H1 (cell line): ENCODE measurements at regions of chrX and their contacts with region 1.

Region 1: GRCh38 chrX:24371391-24371972 is 11.0 kb downstream of the SUPT20HL1 start:
- DNase-seq: peak in 1 of 2 experiments; percentile 72
- H3K4me3 ChIP-seq: peak overlapping the region in 3 of 4 experiments; percentile 18 to 53 (median 23); a peak in 4 of 8 replicates
- H3K27ac ChIP-seq: no peak overlapping the region
- H3K4me1 ChIP-seq: peaks cover 7 to 22% (median 13%) of the 10 kb centered on the region in 4 experiments; a peak in 6 of 7 replicates
- H3K27me3 ChIP-seq: peaks cover 0 to 7% (median 4%) of the 10 kb centered on the region in 4 experiments; a peak in 3 of 7 replicates
- CTCF ChIP-seq: peak; percentile 48 to 81 (median 61)
- EP300 ChIP-seq: no peak
- POLR2A ChIP-seq: no peak
- RAD21 ChIP-seq: peak; percentile 74 to 80

Region 2: GRCh38 chrX:24259544-24260240 is 111.8 kb before region 1 on chrX:
- CTCF ChIA-PET with region 1: interaction called, 13 read pairs
- POLR2A ChIA-PET with region 1: no interaction called
- DNase-seq: no peak
- H3K4me3 ChIP-seq: no peak overlapping the region
- H3K27ac ChIP-seq: no peak overlapping the region
- H3K4me1 ChIP-seq: no peaks in the 10 kb centered on the region
- H3K27me3 ChIP-seq: no peaks in the 10 kb centered on the region
- CTCF ChIP-seq: peak in 2 of 3 experiments; percentile 55 to 58; a peak in 3 of 4 replicates
- EP300 ChIP-seq: no peak
- POLR2A ChIP-seq: no peak
- RAD21 ChIP-seq: peak; percentile 77 to 80

Region 3: DNA sequence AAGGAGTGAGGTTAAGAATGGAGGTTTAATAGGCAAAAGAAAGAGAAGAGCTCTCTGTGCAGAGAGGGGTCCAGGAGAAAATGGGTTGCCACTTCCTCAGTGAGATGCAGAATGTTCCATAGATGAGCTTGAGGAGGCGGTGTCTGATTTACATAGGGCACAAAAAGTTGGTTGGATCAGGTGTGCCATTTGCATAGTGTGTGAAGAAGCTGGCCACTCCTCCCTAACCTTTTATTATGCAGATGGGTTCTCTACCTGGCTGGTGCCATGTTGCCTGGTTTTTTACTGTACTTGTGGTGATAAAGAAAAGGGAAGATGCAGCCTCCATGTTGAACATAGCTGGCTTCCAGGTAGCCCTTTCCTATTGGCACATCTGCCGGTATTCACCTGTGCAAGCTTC is 16.2 kb after region 1 on chrX:
- CTCF ChIA-PET with region 1: interaction called, 15 read pairs
- POLR2A ChIA-PET with region 1: interaction called, 3 read pairs
- DNase-seq: no peak
- H3K4me3 ChIP-seq: no peak overlapping the region
- H3K27ac ChIP-seq: no peak overlapping the region
- H3K4me1 ChIP-seq: peaks cover 0 to 4% (median 1%) of the 10 kb centered on the region in 4 experiments; a peak in 2 of 7 replicates
- H3K27me3 ChIP-seq: no peaks in the 10 kb centered on the region
- CTCF ChIP-seq: no peak
- EP300 ChIP-seq: no peak
- POLR2A ChIP-seq: no peak
- RAD21 ChIP-seq: no peak

Region 4: DNA sequence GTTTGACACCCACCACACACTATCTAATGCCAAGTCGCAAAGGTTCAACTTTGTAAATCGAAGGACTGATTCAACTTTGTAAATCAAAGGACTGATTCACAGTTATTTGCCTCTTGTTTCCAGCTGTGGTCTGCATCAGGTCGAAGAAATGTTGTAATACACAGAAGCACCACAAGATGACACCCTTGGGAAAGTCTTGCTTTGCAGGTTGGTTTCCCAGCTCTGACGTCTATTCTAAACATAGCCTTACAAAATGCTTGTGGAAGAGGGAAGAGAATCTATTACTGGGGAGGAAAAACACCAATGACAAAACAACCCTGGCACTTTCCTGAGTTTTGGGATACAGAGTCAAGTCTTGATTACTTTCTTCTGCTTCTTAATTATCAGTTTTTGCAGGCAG is 24.3 kb after region 1 on chrX:
- CTCF ChIA-PET with region 1: interaction called, 31 read pairs
- POLR2A ChIA-PET with region 1: interaction called, 3 read pairs
- DNase-seq: no peak
- H3K4me3 ChIP-seq: no peak overlapping the region
- H3K27ac ChIP-seq: no peak overlapping the region
- H3K4me1 ChIP-seq: no peaks in the 10 kb centered on the region; a peak in 1 of 7 replicates
- H3K27me3 ChIP-seq: no peaks in the 10 kb centered on the region
- CTCF ChIP-seq: peak in 2 of 3 experiments; percentile 70 to 79; a peak in 3 of 4 replicates
- EP300 ChIP-seq: no peak
- POLR2A ChIP-seq: no peak
- RAD21 ChIP-seq: peak; percentile 87 to 91

Region 5: DNA sequence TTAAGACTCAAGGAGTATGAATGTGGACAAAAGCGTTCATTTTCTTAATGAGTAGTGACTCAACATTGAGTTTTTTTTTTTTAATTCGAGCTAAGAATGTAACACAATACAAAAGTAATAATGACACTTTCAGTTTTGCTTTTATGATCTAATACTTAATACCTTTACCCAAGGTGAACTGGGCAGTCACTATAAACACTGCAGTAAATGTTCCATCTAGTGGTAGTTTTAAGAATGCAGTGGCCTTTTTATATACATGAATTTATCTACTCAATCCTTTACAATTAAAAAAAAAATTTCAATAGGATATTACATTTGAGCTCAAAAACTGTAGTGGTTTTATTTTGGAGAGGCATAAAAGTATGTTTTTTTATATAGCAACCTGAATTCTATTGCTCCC is 127.5 kb after region 1 on chrX:
- CTCF ChIA-PET with region 1: interaction called, 47 read pairs
- POLR2A ChIA-PET with region 1: interaction called, 3 read pairs
- DNase-seq: no peak
- H3K4me3 ChIP-seq: no peak overlapping the region
- H3K27ac ChIP-seq: no peak overlapping the region
- H3K4me1 ChIP-seq: peaks cover 0 to 3% (median under 1%) of the 10 kb centered on the region in 4 experiments; a peak in 3 of 7 replicates
- H3K27me3 ChIP-seq: no peaks in the 10 kb centered on the region
- CTCF ChIP-seq: peak in 1 of 3 experiments; percentile 15; a peak in 1 of 4 replicates
- EP300 ChIP-seq: no peak
- POLR2A ChIP-seq: no peak
- RAD21 ChIP-seq: peak in 1 of 2 experiments; percentile 42; a peak in 3 of 4 replicates